ENCODE measurements at regions of chr1 and their contacts with region 1.

Region 1: DNA sequence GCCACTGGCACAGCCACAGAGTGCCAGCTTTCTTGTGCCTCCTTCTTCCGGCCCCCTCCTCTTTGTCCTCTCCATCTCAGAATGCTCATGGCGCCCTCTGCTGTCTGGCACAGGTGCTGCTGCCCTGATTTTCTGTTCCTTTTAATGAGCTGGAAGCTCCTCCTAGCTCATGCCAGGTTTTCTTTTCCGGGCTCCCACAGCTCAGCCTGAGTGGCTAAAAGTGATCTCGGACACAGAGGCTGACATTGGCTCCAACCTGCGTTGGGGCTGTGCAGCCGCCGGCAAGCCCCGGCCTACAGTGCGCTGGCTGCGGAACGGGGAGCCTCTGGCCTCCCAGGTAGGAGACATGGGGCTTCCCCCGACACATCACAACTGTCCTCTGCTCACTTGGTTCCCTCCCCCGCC is 18.7 kb downstream of the CNTN2 start:
- DNase-seq: peak; percentile 78 to 90 (median 88)
- H3K4me3 ChIP-seq: no peak overlapping the region
- H3K27ac ChIP-seq: no peak overlapping the region
- H3K4me1 ChIP-seq: peaks cover 0 to 7% (median 4%) of the 10 kb centered on the region in 4 experiments
- H3K27me3 ChIP-seq: peaks cover 0 to 1% (median 0%) of the 10 kb centered on the region in 5 experiments

Region 2: GRCh38 chr1:204975570-204976235 is 86.0 kb before region 1 on chr1:
- CTCF ChIA-PET with region 1: interaction called, 149 read pairs
- POLR2A ChIA-PET with region 1: interaction called, 5 read pairs
- DNase-seq: peak; percentile 43 to 67 (median 53)
- H3K4me3 ChIP-seq: no peak overlapping the region
- H3K27ac ChIP-seq: no peak overlapping the region
- H3K4me1 ChIP-seq: peaks cover 6 to 49% (median 35%) of the 10 kb centered on the region in 4 experiments
- H3K27me3 ChIP-seq: no peaks in the 10 kb centered on the region

Region 3: GRCh38 chr1:204989266-204990058 is 72.2 kb before region 1 on chr1:
- CTCF ChIA-PET with region 1: interaction called, 166 read pairs
- POLR2A ChIA-PET with region 1: interaction called, 10 read pairs
- DNase-seq: peak; percentile 80 to 90 (median 87)
- H3K4me3 ChIP-seq: no peak overlapping the region
- H3K27ac ChIP-seq: no peak overlapping the region
- H3K4me1 ChIP-seq: peaks cover 11 to 46% (median 35%) of the 10 kb centered on the region in 4 experiments
- H3K27me3 ChIP-seq: no peaks in the 10 kb centered on the region

Region 4: GRCh38 chr1:205003393-205004131 is 58.1 kb before region 1 on chr1:
- CTCF ChIA-PET with region 1: interaction called, 30 read pairs
- POLR2A ChIA-PET with region 1: no interaction called
- DNase-seq: no peak
- H3K4me3 ChIP-seq: no peak overlapping the region
- H3K27ac ChIP-seq: no peak overlapping the region
- H3K4me1 ChIP-seq: no peaks in the 10 kb centered on the region
- H3K27me3 ChIP-seq: no peaks in the 10 kb centered on the region

Region 5: GRCh38 chr1:205041998-205042910 is 19.4 kb before region 1 on chr1:
- CTCF ChIA-PET with region 1: interaction called, 26 read pairs
- POLR2A ChIA-PET with region 1: no interaction called
- DNase-seq: peak in 1 of 3 donors; percentile 11
- H3K4me3 ChIP-seq: no peak overlapping the region
- H3K27ac ChIP-seq: no peak overlapping the region
- H3K4me1 ChIP-seq: peaks cover 0 to 8% (median 3%) of the 10 kb centered on the region in 4 experiments
- H3K27me3 ChIP-seq: peaks cover 2 to 71% (median 28%) of the 10 kb centered on the region in 5 experiments

Region 6: DNA sequence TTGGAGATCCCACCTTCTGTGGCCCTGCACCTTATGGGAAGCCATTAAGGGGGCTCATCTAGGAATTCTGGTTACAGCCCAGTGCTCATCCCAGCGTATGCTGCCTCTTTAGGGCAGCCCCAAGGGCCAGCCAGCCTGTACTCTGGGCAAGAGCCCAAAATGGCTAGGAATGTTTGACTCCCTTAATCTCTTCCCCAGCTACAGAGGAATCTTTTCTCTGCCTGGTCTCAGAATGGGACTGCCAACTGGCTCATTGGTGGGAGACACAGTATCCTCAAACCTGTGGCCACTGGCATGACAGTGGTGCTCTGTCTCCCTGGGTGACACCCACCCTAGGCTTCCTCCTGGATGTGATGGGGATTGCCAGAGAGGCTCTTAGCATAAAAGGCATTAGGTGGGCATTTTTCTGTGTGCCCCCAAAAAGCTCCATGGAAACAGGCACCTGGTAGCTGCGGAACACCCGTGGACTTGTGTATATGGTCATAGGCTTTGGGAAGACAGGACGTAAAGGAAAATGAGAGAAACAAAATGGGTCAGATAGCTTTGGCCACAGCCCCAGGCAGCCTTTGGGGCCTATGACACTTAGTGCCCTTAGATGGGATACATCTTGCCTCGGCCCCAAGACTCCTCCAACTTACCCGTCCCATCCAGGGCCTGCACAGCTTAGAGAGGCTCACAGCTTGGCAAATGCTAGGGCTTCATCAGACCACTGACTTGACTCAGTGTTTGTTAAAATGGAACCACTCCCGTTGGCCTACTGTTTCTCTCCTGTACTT is 15.7 kb after region 1 on chr1:
- CTCF ChIA-PET with region 1: interaction called, 19 read pairs
- POLR2A ChIA-PET with region 1: interaction called, 3 read pairs
- DNase-seq: no peak
- H3K4me3 ChIP-seq: no peak overlapping the region
- H3K27ac ChIP-seq: no peak overlapping the region
- H3K4me1 ChIP-seq: no peaks in the 10 kb centered on the region
- H3K27me3 ChIP-seq: no peaks in the 10 kb centered on the region

Region 7: DNA sequence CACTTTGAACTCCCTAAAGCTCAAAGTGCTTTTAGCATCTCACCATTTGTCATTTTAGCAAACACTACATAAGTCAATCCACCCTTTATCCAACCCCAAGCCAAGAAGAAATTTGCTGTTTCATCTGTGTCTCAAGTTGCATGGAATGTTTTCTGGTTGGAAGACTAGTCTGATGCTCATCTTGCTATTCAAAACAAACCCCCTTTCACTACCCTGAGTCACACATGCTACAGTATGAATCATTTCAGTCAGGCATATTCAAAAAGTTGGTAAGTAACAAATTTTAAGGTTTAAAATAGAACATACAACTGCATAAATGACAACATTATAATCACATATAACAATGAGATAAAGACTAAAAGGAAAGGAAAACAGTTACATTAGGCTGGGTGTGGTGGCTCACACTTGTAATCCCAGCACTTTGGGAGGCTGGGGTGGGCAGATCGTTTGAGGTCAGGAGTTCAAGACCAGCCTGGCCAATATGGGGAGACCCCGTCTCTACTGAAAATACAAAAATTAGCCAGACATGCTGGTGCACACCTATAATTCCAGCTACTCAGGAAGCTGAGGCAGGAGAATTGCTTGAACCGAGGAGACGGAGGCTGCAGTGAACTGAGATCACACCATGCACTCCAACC is 111.2 kb after region 1 on chr1:
- CTCF ChIA-PET with region 1: no interaction called
- POLR2A ChIA-PET with region 1: no interaction called
- DNase-seq: no peak
- H3K4me3 ChIP-seq: no peak overlapping the region
- H3K27ac ChIP-seq: no peak overlapping the region
- H3K4me1 ChIP-seq: peaks cover 0 to 13% (median 8%) of the 10 kb centered on the region in 4 experiments
- H3K27me3 ChIP-seq: no peaks in the 10 kb centered on the region

Measured in common myeloid progenitor, CD34-positive (primary cell).